ENCODE measurements at regions of chr21 and their contacts with region 1.

Region 1: GRCh38 chr21:34888569-34889319 is 160.4 kb downstream of the RUNX1 start:
- DNase-seq: peak; percentile 80
- H3K4me3 Mint-ChIP-seq: peak overlapping the region; percentile 93
- H3K27ac Mint-ChIP-seq: peak overlapping the region; percentile 99
- H3K4me1 Mint-ChIP-seq: peaks cover 54% of the 10 kb centered on the region
- H3K27me3 Mint-ChIP-seq: peaks cover 3% of the 10 kb centered on the region

Region 2: DNA sequence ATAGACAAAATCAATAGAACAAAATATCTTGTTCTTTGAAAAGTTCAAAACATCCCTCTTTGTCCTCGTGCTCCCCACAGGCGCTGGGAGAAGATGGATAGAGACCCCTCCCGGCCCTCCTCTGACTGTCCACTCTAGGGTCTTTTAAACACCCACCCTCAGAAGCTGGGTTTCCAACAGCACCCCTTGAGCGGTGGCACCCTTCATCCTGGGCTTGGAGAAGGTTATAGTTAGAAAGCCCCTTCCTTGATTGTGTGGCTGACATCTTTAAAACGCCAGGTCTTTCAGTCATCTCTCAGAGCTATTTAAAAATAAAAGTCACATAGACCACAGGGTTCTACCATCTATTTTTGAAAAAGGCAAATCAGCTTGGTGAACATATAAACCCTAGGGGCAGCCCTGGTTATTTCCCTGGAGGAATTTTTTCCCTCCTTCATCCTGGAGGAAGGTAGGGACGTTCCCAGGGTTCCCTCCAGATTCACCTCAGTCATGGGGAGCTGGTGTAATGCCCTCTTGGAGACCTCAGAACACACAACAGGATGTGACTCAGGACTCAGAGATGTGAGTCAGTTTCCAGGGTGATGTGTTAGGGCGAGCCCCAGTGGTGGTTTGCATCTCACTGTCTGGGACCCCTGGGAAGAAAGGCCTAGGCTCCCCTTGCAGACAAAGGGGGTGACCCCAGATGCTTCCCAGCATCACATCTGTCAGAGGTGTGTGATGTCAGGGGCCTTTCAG is 81.4 kb before region 1 on chr21:
- intact Hi-C with region 1: loop called (anchors 1 kb)
- DNase-seq: peak; percentile 54
- H3K4me3 Mint-ChIP-seq: peak overlapping the region; percentile 56
- H3K27ac Mint-ChIP-seq: peak overlapping the region; percentile 93
- H3K4me1 Mint-ChIP-seq: peaks cover 92% of the 10 kb centered on the region
- H3K27me3 Mint-ChIP-seq: no peaks in the 10 kb centered on the region

Region 3: DNA sequence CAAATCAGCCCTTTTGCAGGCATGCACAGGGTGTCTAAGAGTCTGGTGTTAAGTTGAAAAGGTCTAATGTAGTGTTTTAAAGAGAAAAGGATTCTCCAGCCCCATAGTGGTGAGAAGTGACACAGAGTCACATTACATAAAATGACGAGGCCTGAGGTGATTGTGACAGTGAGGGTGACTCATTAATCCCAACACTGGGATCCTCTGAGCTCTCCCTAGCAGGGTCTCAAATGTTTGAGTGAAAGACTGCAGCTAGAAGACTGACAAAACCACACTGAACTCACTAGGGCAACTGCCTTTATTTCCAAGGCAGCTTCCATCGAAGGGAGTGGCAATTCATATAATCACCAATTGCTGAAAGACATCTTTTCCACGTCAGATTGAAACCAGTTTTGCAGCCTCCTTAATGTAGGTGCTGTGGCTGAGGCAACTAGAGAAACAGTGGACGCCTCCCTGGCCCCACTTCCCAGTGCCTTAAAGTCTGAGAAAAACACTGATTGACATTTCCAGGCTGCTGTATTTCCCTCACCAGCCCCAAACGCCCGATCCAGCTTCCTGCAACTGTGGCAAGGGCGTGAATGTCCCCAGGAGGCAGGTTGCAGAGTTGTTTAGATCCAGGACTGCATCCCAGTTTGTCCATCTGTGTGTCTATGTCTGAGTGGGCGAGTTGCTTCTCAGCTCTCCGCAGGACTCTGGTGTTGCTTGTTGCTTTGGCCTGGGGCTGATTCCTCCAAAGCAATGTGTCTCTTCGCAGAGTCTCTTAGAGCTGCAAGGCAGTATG is 79.0 kb after region 1 on chr21:
- intact Hi-C with region 1: loop called (anchors 1 kb)
- DNase-seq: no peak
- H3K4me3 Mint-ChIP-seq: peak overlapping the region; percentile 80
- H3K27ac Mint-ChIP-seq: peak overlapping the region; percentile 94
- H3K4me1 Mint-ChIP-seq: peaks cover 91% of the 10 kb centered on the region
- H3K27me3 Mint-ChIP-seq: peaks cover 2% of the 10 kb centered on the region

Region 4: GRCh38 chr21:35088319-35088771 is 199.6 kb after region 1 on chr21:
- intact Hi-C with region 1: loop called (anchors 1 kb)
- DNase-seq: no peak
- H3K4me3 Mint-ChIP-seq: no peak overlapping the region
- H3K27ac Mint-ChIP-seq: peak overlapping the region; percentile 89
- H3K4me1 Mint-ChIP-seq: peaks cover 36% of the 10 kb centered on the region
- H3K27me3 Mint-ChIP-seq: no peaks in the 10 kb centered on the region

Region 5: GRCh38 chr21:35342440-35342839 is 453.7 kb after region 1 on chr21:
- intact Hi-C with region 1: loop called (anchors 1 kb)
- DNase-seq: no peak
- H3K4me3 Mint-ChIP-seq: peak overlapping the region; percentile 75
- H3K27ac Mint-ChIP-seq: peak overlapping the region; percentile 99
- H3K4me1 Mint-ChIP-seq: peaks cover 51% of the 10 kb centered on the region
- H3K27me3 Mint-ChIP-seq: no peaks in the 10 kb centered on the region

Region 6: GRCh38 chr21:35840197-35840799 is 951.6 kb after region 1 on chr21:
- intact Hi-C with region 1: loop called (anchors 1 kb)
- DNase-seq: peak; percentile 28
- H3K4me3 Mint-ChIP-seq: no peak overlapping the region
- H3K27ac Mint-ChIP-seq: no peak overlapping the region
- H3K4me1 Mint-ChIP-seq: no peaks in the 10 kb centered on the region
- H3K27me3 Mint-ChIP-seq: peaks cover 7% of the 10 kb centered on the region